ENCODE measurements at regions of chr20 and their contacts with region 1.

Region 1: GRCh38 chr20:31661625-31662371 is 24.1 kb downstream of the COX4I2 start:
- DNase-seq: peak; percentile 67 to 85 (median 75)
- H3K4me3 ChIP-seq: peak overlapping the region; percentile 72
- H3K4me3 Mint-ChIP-seq: peak overlapping the region; percentile 3 to 88 (median 79)
- H3K27ac ChIP-seq: peak overlapping the region; percentile 65
- H3K27ac Mint-ChIP-seq: peak overlapping the region; percentile 48 to 96 (median 86)
- H3K4me1 ChIP-seq: peaks cover 33% of the 10 kb centered on the region
- H3K4me1 Mint-ChIP-seq: peaks cover 41 to 46% (median 45%) of the 10 kb centered on the region in 3 donors
- H3K27me3 ChIP-seq: no peaks in the 10 kb centered on the region
- H3K27me3 Mint-ChIP-seq: no peaks in the 10 kb centered on the region

Region 2: DNA sequence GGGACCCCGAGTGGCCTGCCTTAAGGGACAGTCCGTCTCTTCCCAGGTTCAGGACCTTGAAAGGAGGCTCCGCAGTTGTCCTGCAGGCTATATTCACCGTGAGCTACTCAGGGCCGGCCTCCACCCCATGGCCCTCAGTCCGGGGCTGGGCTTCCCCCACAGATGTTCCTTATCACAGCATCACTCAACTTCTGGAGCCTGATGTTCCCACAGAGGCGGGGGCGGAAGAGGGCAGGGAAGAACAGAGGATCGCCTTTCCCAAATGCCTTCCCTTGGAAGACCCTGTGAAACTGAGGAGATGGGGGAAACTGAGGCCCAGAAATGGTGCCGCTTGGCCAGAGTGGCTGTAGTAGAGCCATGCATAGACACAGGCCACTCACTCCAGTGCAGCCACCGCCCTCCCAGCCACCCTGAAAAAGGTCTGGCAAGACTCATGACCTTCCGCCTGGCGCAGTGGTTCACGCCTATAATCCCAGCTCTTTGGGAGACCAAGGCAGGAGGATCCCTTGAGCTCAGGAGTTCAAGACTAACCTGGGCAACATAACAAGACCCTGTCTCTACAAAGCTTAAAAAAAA is 28.4 kb before region 1 on chr20:
- CTCF ChIA-PET with region 1: interaction called, 13 read pairs
- POLR2A ChIA-PET with region 1: no interaction called
- DNase-seq: no peak
- H3K4me3 ChIP-seq: no peak overlapping the region
- H3K4me3 Mint-ChIP-seq: no peak overlapping the region
- H3K27ac ChIP-seq: no peak overlapping the region
- H3K27ac Mint-ChIP-seq: no peak overlapping the region
- H3K4me1 ChIP-seq: no peaks in the 10 kb centered on the region
- H3K4me1 Mint-ChIP-seq: no peaks in the 10 kb centered on the region
- H3K27me3 ChIP-seq: no peaks in the 10 kb centered on the region
- H3K27me3 Mint-ChIP-seq: no peaks in the 10 kb centered on the region

Region 3: GRCh38 chr20:31674895-31675827 is 13.4 kb after region 1 on chr20:
- CTCF ChIA-PET with region 1: interaction called, 47 read pairs
- POLR2A ChIA-PET with region 1: interaction called, 3 read pairs
- DNase-seq: peak; percentile 59 to 77 (median 67)
- H3K4me3 ChIP-seq: peak overlapping the region; percentile 80
- H3K4me3 Mint-ChIP-seq: peak overlapping the region; percentile 88 to 97 (median 94)
- H3K27ac ChIP-seq: peak overlapping the region; percentile 86
- H3K27ac Mint-ChIP-seq: peak overlapping the region; percentile 95 to 100 (median 98)
- H3K4me1 ChIP-seq: peaks cover 79% of the 10 kb centered on the region
- H3K4me1 Mint-ChIP-seq: peaks cover 76 to 87% (median 77%) of the 10 kb centered on the region in 3 donors
- H3K27me3 ChIP-seq: no peaks in the 10 kb centered on the region
- H3K27me3 Mint-ChIP-seq: no peaks in the 10 kb centered on the region

Region 4: DNA sequence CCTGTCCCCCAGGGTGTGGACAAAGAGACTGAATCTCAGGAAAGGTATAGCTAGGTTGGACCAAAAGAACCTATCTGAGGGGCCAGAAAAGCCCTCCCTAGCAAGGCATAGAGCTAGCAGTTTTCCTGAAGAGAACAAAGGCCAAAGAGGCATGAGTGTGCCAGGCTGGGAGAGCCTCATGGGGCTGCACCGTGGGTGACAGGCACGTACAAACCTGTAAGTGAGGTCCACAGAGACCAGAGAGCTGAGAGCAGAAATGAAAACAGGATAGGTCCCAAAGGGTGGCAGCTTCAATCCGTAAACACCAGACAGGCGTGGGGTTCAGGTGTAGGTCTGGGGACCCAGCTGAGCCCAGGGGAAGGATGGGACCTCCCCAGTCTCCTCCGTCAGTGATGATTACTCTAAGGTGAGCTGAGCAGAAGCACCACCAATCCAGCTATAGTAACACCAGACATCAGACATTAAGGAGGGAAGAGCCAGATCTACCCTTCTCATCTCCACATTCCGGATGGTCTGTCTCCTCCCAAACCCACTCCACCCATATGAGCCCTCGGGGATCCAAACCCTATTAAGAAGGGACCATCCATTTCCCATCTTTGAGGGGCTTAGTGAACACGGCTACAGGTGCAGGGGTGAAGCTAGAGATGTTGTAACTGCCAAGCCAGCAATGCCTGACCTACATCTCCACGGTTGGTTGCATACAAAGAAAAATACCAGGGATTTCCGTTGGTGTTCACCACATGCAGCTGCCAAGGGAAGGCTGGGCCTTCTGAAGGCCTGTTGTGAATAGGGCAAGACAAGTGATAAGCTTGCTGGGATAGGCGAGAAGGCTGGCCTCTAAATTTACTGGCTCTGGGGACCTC is 22.6 kb after region 1 on chr20:
- CTCF ChIA-PET with region 1: interaction called, 25 read pairs
- POLR2A ChIA-PET with region 1: no interaction called
- DNase-seq: peak in 2 of 5 donors; percentile 40 to 49
- H3K4me3 ChIP-seq: no peak overlapping the region
- H3K4me3 Mint-ChIP-seq: peak overlapping the region in 6 of 7 donors; percentile 41 to 74 (median 68)
- H3K27ac ChIP-seq: peak overlapping the region; percentile 52
- H3K27ac Mint-ChIP-seq: peak overlapping the region; percentile 80 to 98 (median 94)
- H3K4me1 ChIP-seq: peaks cover 77% of the 10 kb centered on the region
- H3K4me1 Mint-ChIP-seq: peaks cover 79 to 89% (median 82%) of the 10 kb centered on the region in 3 donors
- H3K27me3 ChIP-seq: no peaks in the 10 kb centered on the region
- H3K27me3 Mint-ChIP-seq: no peaks in the 10 kb centered on the region

Region 5: GRCh38 chr20:31712564-31713311 is 50.9 kb after region 1 on chr20:
- CTCF ChIA-PET with region 1: interaction called, 39 read pairs
- POLR2A ChIA-PET with region 1: no interaction called
- DNase-seq: no peak
- H3K4me3 ChIP-seq: no peak overlapping the region
- H3K4me3 Mint-ChIP-seq: peak overlapping the region in 4 of 7 donors; percentile 12 to 57 (median 45)
- H3K27ac ChIP-seq: peak overlapping the region; percentile 28
- H3K27ac Mint-ChIP-seq: peak overlapping the region in 7 of 8 donors; percentile 49 to 89 (median 85)
- H3K4me1 ChIP-seq: peaks cover 76% of the 10 kb centered on the region
- H3K4me1 Mint-ChIP-seq: peaks cover 81 to 97% (median 95%) of the 10 kb centered on the region in 3 donors
- H3K27me3 ChIP-seq: no peaks in the 10 kb centered on the region
- H3K27me3 Mint-ChIP-seq: no peaks in the 10 kb centered on the region

Region 6: GRCh38 chr20:31738729-31739561 is 77.1 kb after region 1 on chr20 and contains the start of gene TPX2:
- CTCF ChIA-PET with region 1: interaction called, 19 read pairs
- POLR2A ChIA-PET with region 1: no interaction called
- DNase-seq: peak; percentile 63 to 79 (median 71)
- H3K4me3 ChIP-seq: peak within 1 kb of the TSS; percentile 47
- H3K4me3 Mint-ChIP-seq: no peak within 1 kb of the TSS
- H3K27ac ChIP-seq: peak within 1 kb of the TSS; percentile 76
- H3K27ac Mint-ChIP-seq: no peak within 1 kb of the TSS
- H3K4me1 ChIP-seq: peaks cover 13% of the 10 kb centered on the region
- H3K4me1 Mint-ChIP-seq: peaks cover 0 to 2% (median 0%) of the 10 kb centered on the region in 3 donors
- H3K27me3 ChIP-seq: no peaks in the 10 kb centered on the region
- H3K27me3 Mint-ChIP-seq: peaks cover 0 to 2% of the 10 kb centered on the region in 2 donors
- total RNA-seq, gene TPX2: 60.3 to 62.7 TPM

Region 7: DNA sequence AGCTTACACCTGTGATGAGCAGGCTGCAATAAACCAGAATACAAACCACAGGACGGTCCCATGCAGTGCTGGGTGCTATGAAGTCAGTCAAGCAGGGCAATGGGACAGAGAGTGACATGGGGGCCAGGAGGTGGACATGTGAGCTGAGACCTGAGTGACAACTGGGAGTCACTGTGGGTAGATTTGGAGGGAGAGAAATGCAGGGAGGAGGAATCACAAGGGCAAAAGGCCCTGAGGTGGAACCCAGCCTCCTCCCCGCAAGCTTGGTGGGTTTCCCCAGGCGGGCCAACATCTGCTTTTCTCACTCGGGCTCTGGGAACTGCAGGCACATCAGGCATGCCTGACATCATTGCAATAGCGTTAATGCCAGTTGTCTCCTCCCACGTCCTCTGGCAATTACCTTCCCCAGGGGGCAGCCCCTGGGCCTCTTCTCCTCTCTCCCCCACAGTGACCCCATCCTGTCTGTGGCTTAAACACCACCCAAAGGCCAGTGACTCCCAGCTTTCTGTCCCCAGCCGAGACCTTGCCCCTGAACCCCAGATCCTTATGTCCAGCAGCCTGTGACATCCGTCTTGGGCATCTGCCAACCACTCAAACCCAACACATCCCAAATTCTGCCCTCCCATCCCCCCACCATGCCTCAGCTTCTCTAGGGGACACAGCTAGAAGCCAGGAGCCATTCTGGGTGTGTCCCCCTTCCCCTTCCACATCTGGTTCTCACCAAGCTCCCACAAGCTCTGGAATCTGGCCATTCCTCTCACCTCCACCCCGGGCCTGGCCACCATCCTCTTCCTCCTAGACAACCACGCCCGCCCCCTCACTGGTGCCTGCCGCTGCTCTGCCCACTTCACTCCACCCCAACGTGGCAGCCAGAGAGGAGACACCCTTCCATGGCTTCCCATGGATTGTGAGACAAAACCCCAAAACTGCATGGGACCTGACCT is 261.9 kb after region 1 on chr20:
- CTCF ChIA-PET with region 1: no interaction called
- POLR2A ChIA-PET with region 1: no interaction called
- DNase-seq: no peak
- H3K4me3 ChIP-seq: no peak overlapping the region
- H3K4me3 Mint-ChIP-seq: peak overlapping the region in 1 of 7 donors; percentile 79
- H3K27ac ChIP-seq: no peak overlapping the region
- H3K27ac Mint-ChIP-seq: no peak overlapping the region
- H3K4me1 ChIP-seq: no peaks in the 10 kb centered on the region
- H3K4me1 Mint-ChIP-seq: no peaks in the 10 kb centered on the region
- H3K27me3 ChIP-seq: peaks cover 6% of the 10 kb centered on the region
- H3K27me3 Mint-ChIP-seq: peaks cover 31 to 75% of the 10 kb centered on the region in 2 donors